Activated B cell treated with CpG ODN at 0.5 μM for 24 hours (primary cell): ENCODE measurements at regions of chr16 and their contacts with region 1.

Region 1: DNA sequence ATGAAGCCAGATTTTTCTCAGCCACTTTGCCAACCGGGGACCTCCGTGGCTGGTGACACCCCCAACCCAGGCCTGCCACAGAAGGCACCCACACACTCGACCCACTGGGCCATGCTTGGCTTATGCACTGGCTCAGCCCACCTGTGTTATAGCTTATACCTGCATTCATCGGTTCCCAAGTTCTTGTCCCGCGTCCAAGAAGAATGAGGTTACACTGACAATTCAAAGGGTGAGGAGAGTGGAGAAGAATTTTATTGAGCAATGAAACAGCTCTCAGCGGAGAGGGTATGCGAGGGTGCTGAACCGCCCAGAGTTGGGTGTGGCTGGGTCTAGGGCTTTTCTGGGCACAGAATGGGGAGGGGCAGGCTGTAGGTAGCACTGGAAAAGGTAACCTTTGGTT is 22.2 kb upstream of the CDH15 start:
- DNase-seq: no peak
- ATAC-seq: no peak
- H3K4me3 Mint-ChIP-seq: no peak overlapping the region
- H3K27ac Mint-ChIP-seq: no peak overlapping the region
- H3K4me1 Mint-ChIP-seq: peaks cover 4% of the 10 kb centered on the region
- H3K27me3 Mint-ChIP-seq: no peaks in the 10 kb centered on the region
- CTCF ChIP-seq: no peak

Region 2: GRCh38 chr16:87765776-87766484 is 1383.5 kb before region 1 on chr16 and contains the start of gene KLHDC4:
- CTCF ChIA-PET with region 1: no interaction called
- POLR2A ChIA-PET with region 1: no interaction called
- intact Hi-C with region 1: no loop called
- DNase-seq: peak; percentile 87
- ATAC-seq: peak; percentile 84
- H3K4me3 Mint-ChIP-seq: peak within 1 kb of the TSS; percentile 100
- H3K27ac Mint-ChIP-seq: peak within 1 kb of the TSS; percentile 98
- H3K4me1 Mint-ChIP-seq: peaks cover 31% of the 10 kb centered on the region
- H3K27me3 Mint-ChIP-seq: no peaks in the 10 kb centered on the region
- CTCF ChIP-seq: no peak
- total RNA-seq, gene KLHDC4: 70.1 and 87.0 TPM in 2 replicates

Region 3: GRCh38 chr16:88843256-88843655 is 306.1 kb before region 1 on chr16:
- CTCF ChIA-PET with region 1: no interaction called
- POLR2A ChIA-PET with region 1: interaction called, 11 read pairs
- intact Hi-C with region 1: no loop called
- DNase-seq: no peak
- ATAC-seq: no peak
- H3K4me3 Mint-ChIP-seq: no peak overlapping the region
- H3K27ac Mint-ChIP-seq: no peak overlapping the region
- H3K4me1 Mint-ChIP-seq: peaks cover 4% of the 10 kb centered on the region
- H3K27me3 Mint-ChIP-seq: no peaks in the 10 kb centered on the region
- CTCF ChIP-seq: no peak

Region 4: GRCh38 chr16:89410794-89411309 is 261.5 kb after region 1 on chr16:
- CTCF ChIA-PET with region 1: no interaction called
- POLR2A ChIA-PET with region 1: no interaction called
- intact Hi-C with region 1: no loop called
- DNase-seq: no peak
- ATAC-seq: no peak
- H3K4me3 Mint-ChIP-seq: peak overlapping the region; percentile 50
- H3K27ac Mint-ChIP-seq: no peak overlapping the region
- H3K4me1 Mint-ChIP-seq: peaks cover 76% of the 10 kb centered on the region
- H3K27me3 Mint-ChIP-seq: no peaks in the 10 kb centered on the region
- CTCF ChIP-seq: no peak